Stomach (tissue), 19 donors: ENCODE measurements at regions of chr14 and their contacts with region 1.

Region 1: GRCh38 chr14:25049568-25050268 is at the start of gene STXBP6:
- DNase-seq: peak; percentile 77 to 94
- H3K4me3 ChIP-seq: peak within 1 kb of the TSS; percentile 64 to 85 (median 70)
- H3K27ac ChIP-seq: peak within 1 kb of the TSS; percentile 67 to 88 (median 82)
- H3K4me1 ChIP-seq: peaks cover 8 to 55% (median 24%) of the 10 kb centered on the region in 4 donors
- H3K27me3 ChIP-seq: peaks cover 0 to 39% (median 8%) of the 10 kb centered on the region in 3 donors
- CTCF ChIP-seq: no peak
- EP300 ChIP-seq: no peak
- POLR2A ChIP-seq: no peak
- total RNA-seq, gene STXBP6: 8.8 to 37.1 (median 25.5) TPM

Region 2: GRCh38 chr14:24806061-24806678 is 243.5 kb before region 1 on chr14:
- intact Hi-C with region 1: loop called (anchors 10 kb)
- DNase-seq: peak; percentile 85 to 88
- H3K4me3 ChIP-seq: no peak overlapping the region
- H3K27ac ChIP-seq: no peak overlapping the region
- H3K4me1 ChIP-seq: peaks cover 0 to 24% (median 14%) of the 10 kb centered on the region in 4 donors
- H3K27me3 ChIP-seq: no peaks in the 10 kb centered on the region
- CTCF ChIP-seq: peak in 5 of 7 experiments; percentile 69 to 89 (median 79)
- EP300 ChIP-seq: no peak
- POLR2A ChIP-seq: no peak